ENCODE measurements at regions of chr3 and their contacts with region 1.

Region 1: GRCh38 chr3:4986782-4987537 is 7.7 kb downstream of the BHLHE40 start:
- DNase-seq: peak; percentile 87
- ATAC-seq: peak; percentile 55
- H3K4me3 Mint-ChIP-seq: peak overlapping the region; percentile 72
- H3K27ac Mint-ChIP-seq: peak overlapping the region; percentile 76
- H3K4me1 Mint-ChIP-seq: peaks cover 56% of the 10 kb centered on the region
- H3K27me3 Mint-ChIP-seq: no peaks in the 10 kb centered on the region

Region 2: GRCh38 chr3:5006755-5007202 is 19.8 kb after region 1 on chr3:
- CTCF ChIA-PET with region 1: interaction called, 8 read pairs
- POLR2A ChIA-PET with region 1: interaction called, 3 read pairs
- intact Hi-C with region 1: loop called (anchors 1 kb)
- DNase-seq: peak; percentile 90
- ATAC-seq: peak; percentile 94
- H3K4me3 Mint-ChIP-seq: peak overlapping the region; percentile 37
- H3K27ac Mint-ChIP-seq: peak overlapping the region; percentile 90
- H3K4me1 Mint-ChIP-seq: peaks cover 49% of the 10 kb centered on the region
- H3K27me3 Mint-ChIP-seq: peaks cover 6% of the 10 kb centered on the region

Region 3: GRCh38 chr3:5057857-5058324 is 70.9 kb after region 1 on chr3:
- CTCF ChIA-PET with region 1: interaction called, 21 read pairs
- POLR2A ChIA-PET with region 1: no interaction called
- intact Hi-C with region 1: no loop called
- DNase-seq: peak; percentile 87
- ATAC-seq: peak; percentile 96
- H3K4me3 Mint-ChIP-seq: no peak overlapping the region
- H3K27ac Mint-ChIP-seq: peak overlapping the region; percentile 11
- H3K4me1 Mint-ChIP-seq: peaks cover 17% of the 10 kb centered on the region
- H3K27me3 Mint-ChIP-seq: peaks cover 8% of the 10 kb centered on the region